AG04449 (cell line): ENCODE measurements at regions of chr12 and their contacts with region 1.

Region 1: DNA sequence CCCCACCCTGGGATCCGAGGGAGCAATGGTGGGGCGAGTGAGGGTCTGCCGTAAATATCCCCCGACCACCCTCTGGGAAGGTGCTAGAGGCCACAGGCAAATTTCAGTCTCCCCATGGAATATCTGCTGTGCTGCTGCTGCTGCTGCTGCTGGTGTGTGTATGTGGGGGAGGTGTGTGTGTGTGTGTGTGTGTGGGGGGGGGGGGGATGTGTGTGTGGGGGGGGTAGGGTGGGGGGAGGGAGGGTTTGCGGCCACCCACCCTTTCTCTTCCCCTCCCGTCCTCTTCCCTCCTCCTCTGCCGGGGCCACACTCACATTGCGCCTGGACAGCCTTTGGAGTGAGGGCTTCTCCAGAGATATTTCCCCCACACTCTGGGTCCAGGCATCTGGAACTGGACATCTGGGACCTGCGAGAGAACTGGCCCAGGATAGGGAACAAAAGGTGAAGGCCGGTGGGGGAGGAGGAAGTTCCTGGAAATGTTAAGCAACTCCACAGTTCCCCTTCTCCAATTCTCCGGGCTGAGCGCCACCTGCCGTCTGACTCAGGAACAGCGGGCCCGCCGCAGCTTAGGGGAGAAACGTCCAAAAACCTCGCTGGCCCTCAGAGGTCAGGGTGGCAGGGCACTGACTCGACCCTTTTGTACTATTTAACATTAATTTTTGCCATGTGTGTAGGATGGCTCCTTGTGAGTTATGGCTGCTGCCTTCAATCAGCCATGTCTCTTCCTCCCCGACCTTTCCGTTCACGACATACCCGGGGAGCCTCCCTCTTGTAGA is at the start of gene C1RL:
- DNase-seq: peak; percentile 34
- H3K4me3 ChIP-seq: peak within 1 kb of the TSS; percentile 81
- CTCF ChIP-seq: peak; percentile 95

Region 2: DNA sequence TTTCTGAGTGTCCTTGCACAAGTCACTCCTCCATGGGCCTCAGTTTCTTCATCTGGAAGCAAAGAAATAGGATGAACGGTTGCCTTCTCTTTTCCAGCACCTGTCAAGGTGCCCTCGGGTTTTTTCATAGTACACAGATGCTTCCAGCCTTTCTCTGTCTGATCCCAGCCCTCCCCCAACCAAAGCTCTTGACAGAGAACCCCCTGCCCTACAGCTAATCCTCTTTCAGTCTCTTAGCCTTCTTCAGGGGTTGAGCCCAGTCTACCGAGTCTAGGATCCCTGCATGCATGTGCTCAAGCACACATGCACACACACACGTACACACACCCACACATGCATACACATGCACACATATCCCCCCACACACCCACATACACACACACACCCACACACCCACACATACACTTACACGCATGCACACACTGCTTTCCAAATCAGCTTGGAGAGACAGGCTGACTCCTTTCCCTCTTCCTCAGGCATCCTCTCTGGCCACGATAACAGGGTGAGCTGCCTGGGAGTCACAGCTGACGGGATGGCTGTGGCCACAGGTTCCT is 262.6 kb before region 1 on chr12:
- CTCF ChIA-PET with region 1: no interaction called
- POLR2A ChIA-PET with region 1: no interaction called
- DNase-seq: no peak
- H3K4me3 ChIP-seq: no peak overlapping the region
- CTCF ChIP-seq: no peak

Region 3: DNA sequence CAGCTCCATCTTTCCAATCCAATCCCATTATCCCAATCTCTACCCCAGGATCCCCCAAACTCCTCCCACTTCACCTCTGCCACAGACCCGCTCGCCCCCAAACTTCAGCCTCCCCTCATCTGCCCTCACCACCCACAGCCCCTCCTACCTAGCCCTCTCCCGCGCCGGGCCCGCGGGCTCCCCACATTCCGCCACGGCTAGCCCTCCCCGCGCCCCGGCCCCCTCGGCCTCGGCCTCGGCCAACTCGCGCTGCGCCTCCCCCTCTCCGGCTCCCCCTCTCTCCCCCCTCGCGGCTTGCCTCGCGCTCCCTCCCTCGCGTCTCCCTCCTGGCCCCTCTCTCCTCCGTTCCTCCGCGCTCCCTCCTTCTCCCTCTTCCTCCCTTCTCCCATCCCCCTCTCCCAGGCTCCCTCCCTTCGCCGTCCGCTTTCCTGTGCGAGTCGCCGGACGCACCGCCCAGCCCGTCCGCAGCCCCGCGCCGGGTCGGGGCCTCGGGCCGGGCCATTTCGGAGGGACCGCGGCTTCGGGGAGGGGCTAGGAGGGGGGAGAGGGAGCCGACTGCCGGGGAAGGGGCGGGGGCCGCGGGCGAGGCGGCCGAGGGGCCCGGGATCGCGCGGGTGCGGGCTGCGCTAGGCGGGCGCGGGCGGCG is 181.5 kb before region 1 on chr12 and contains the start of gene ATN1:
- CTCF ChIA-PET with region 1: interaction called, 11 read pairs
- POLR2A ChIA-PET with region 1: no interaction called
- DNase-seq: no peak
- H3K4me3 ChIP-seq: peak within 1 kb of the TSS; percentile 83
- CTCF ChIP-seq: no peak

Region 4: GRCh38 chr12:6965026-6965661 is 143.8 kb before region 1 on chr12:
- CTCF ChIA-PET with region 1: interaction called, 28 read pairs
- POLR2A ChIA-PET with region 1: no interaction called
- DNase-seq: no peak
- H3K4me3 ChIP-seq: no peak overlapping the region
- CTCF ChIP-seq: peak; percentile 93

Region 5: GRCh38 chr12:7060353-7060954 is 48.5 kb before region 1 on chr12 and contains the start of gene C1S:
- CTCF ChIA-PET with region 1: interaction called, 217 read pairs
- POLR2A ChIA-PET with region 1: interaction called, 11 read pairs
- DNase-seq: peak; percentile 96
- H3K4me3 ChIP-seq: peak within 1 kb of the TSS; percentile 53
- CTCF ChIP-seq: peak; percentile 76

Region 6: DNA sequence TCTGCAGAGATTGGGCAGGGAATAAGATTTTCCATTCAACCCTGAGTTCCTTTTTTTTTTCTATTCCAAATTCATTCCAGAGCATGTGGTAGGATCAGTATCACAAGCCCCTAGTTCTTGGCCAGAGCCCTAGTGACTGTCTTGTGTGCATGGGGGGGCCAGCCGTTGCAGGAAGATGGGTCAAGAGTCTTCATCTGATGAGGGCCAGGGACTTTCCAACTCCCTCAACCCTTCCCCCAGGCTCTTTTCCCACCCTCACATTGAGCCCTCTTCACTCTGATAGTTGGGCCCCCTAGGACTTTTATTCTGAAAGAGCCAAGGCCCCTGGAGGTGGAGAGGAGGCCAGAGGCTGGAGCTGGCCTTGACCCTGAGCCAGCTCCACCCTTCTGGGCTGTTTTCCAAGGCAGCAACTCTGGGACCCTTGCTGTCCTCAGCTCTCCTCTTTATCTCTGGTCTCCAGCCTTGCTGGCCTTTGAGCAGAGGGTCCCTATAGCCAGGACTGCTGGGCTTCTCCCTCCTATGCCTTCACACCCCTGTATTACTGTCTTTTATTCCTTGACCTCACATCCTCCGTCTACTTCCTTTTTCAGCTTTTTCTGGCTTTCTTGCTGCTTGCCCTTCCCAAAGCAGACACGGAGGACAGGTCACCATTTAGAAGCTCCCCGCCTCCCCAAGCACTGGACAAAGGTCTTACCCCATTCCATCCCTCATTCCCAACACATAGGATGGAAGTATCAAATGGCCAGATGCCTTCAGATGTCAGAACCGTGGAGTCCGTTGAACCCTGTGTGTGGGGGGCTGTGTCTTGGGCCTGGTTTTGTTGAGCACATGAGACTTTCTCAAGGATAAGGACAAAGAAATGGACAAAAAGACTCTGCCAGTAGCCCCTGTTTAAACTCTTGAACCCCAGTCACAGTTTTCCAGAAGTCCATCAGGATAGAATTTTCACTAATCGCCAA is 14.1 kb after region 1 on chr12:
- CTCF ChIA-PET with region 1: interaction called, 158 read pairs
- POLR2A ChIA-PET with region 1: no interaction called
- DNase-seq: no peak
- H3K4me3 ChIP-seq: no peak overlapping the region
- CTCF ChIP-seq: no peak

Region 7: DNA sequence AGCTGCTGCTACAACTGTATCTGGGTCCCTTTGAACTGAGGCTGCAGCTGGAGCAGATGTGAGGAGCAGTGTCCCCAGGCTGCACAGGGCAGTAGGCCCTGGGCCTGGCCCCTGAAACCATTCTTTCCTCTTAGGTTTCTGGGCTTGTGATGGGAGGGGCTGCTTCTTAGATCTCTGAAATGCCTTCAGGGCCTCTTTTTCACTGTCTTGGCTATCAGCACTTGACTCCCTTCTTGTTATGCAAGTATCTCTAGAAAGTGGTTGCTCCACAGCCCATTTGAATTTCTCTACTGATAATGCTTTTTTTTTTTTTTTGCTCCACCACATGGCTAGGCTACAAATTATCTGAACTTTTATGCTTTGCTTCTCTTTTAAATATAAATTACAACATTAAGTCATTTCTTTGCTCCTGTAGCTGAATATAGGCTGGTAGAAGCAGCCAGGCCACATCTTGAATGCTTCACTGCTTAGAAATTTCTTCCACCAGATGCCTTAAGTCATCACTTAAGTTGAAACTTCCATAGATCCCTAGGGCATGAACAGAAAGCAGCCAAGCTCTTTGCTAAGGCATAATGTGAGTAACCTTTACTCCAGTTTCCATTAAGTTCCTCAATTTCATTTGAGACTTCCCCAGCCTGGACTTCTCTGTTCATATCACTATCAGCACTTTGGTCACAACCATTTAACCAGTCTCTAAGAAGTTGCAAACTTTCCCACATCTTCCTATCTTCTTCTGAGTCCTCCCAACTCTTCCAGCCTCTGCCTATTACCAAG is 236.0 kb after region 1 on chr12:
- CTCF ChIA-PET with region 1: no interaction called
- POLR2A ChIA-PET with region 1: no interaction called
- DNase-seq: no peak
- H3K4me3 ChIP-seq: no peak overlapping the region
- CTCF ChIP-seq: no peak

Region 8: GRCh38 chr12:7748852-7749251 is 639.9 kb after region 1 on chr12:
- CTCF ChIA-PET with region 1: no interaction called
- POLR2A ChIA-PET with region 1: no interaction called
- DNase-seq: no peak
- H3K4me3 ChIP-seq: no peak overlapping the region
- CTCF ChIP-seq: no peak